Activated naive CD4-positive, alpha-beta T cell treated with anti-CD3 and anti-CD28 coated beads for 36 hours (primary cell): ENCODE measurements at regions of chr2 and their contacts with region 1.

Region 1: GRCh38 chr2:190432567-190433231 is 24.5 kb downstream of the MFSD6 start:
- DNase-seq: peak; percentile 19
- H3K4me3 Mint-ChIP-seq: no peak overlapping the region
- H3K27ac Mint-ChIP-seq: no peak overlapping the region
- H3K4me1 Mint-ChIP-seq: peaks cover 49% of the 10 kb centered on the region
- H3K27me3 Mint-ChIP-seq: no peaks in the 10 kb centered on the region

Region 2: DNA sequence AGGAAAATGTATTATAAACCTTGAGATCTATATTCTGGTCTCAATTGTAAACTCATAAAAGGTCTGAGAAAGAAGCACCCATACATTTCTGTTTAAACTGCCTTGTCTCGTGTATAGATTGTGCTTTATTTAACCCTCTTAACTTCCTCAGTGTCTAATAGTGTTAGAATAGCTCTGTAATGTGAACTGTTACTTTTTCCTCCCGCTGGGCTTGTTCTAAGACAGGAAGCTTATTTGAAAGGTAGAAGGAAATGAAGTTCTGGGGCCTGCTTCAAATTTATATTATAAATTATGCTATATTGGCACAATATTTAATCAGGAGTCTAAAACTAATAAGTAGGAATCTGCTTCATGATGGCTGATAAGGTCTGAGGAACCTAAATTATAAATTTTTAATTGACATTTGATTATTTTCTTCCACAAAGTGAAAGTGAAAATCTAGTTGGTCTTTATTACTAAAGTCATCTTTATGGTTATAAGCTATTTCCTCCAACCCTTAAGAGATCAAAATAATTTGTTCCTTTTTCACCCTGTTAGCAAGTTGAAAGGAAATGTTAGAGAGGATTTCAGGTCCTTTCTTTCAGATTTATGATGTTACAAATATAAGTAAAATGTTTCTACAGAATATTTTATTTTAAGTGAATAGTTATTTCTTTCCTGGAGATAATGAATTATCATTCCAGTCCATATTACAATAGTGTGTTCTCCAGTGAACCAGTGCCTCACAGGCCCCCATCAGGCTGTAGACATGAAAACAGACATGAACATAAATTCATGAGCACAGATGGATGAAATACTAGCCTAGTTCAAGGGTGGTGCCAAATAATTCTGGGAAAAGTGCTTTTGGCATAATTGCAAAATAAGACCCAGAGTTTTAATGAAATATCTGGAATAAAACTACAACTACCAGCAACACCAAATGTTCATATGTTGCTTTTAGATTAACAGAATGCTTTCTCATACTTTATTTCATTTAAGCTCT is 16.6 kb before region 1 on chr2:
- CTCF ChIA-PET with region 1: no interaction called
- intact Hi-C with region 1: loop called (anchors 1 kb)
- DNase-seq: no peak
- H3K4me3 Mint-ChIP-seq: peak overlapping the region; percentile 58
- H3K27ac Mint-ChIP-seq: peak overlapping the region; percentile 91
- H3K4me1 Mint-ChIP-seq: peaks cover 73% of the 10 kb centered on the region
- H3K27me3 Mint-ChIP-seq: no peaks in the 10 kb centered on the region

Region 3: DNA sequence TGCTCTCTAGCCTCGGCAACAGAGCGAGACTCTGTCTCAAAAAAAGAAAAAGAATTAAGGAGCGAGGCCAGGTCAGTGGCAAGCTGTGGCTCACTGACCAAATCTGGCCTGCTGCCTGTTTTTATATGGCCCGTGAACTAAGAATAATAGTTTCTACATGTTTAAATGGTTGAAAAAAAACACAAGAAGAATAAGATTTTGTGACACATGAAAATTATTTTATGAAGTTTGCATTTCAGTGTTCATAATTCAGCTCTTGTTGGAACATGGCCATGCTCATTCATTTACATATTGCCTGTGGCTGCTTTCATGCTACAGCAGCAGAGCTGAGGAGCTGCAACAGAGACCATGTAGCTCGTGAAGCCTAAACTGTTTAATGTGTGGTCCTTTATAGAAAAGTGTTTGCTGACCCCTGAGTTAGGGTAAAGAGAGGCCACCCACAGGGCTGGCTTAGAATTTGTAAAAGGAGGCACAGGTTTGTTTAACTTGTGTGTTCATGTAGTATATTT is 34.9 kb after region 1 on chr2:
- CTCF ChIA-PET with region 1: no interaction called
- intact Hi-C with region 1: no loop called
- DNase-seq: no peak
- H3K4me3 Mint-ChIP-seq: no peak overlapping the region
- H3K27ac Mint-ChIP-seq: no peak overlapping the region
- H3K4me1 Mint-ChIP-seq: peaks cover 58% of the 10 kb centered on the region
- H3K27me3 Mint-ChIP-seq: no peaks in the 10 kb centered on the region

Region 4: GRCh38 chr2:190771726-190772125 is 339.0 kb after region 1 on chr2:
- CTCF ChIA-PET with region 1: no interaction called
- intact Hi-C with region 1: no loop called
- DNase-seq: no peak
- H3K4me3 Mint-ChIP-seq: no peak overlapping the region
- H3K27ac Mint-ChIP-seq: no peak overlapping the region
- H3K4me1 Mint-ChIP-seq: no peaks in the 10 kb centered on the region
- H3K27me3 Mint-ChIP-seq: no peaks in the 10 kb centered on the region